ENCODE measurements at regions of chr17 and their contacts with region 1.

Region 1: DNA sequence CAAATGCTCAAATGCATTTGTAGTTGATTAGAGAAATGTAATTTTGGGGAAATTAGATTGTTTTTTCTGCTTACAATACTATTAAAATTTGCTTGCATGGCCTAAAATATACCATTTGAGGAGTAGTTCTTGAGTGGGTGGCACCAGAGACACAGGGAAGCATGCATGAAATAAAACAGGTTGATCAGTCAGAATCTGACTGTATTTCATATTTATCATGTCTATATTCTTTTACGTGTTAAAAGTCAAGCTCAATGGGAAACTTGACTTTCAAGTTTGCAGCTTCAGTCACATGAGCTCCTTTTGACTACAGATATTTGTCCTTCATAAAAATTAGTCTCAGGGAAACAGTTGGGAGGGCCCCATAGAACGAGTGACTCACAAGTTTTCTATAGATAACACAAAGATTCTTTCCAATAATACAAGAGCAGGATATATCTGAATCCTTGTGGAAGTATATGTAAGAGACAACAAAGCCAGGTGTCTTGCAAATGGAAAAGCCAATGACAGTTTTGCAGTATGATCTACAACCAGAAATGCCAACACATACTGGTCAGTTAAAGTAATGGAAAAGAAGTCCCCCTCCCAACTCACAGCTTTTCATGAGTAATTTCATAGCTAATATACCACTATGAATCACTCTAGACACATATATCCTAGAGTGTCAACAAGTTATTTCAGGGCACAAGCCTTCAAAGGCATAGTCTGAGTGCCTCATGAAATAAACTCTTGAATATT is 42.2 kb upstream of the CORO6 start:
- DNase-seq: no peak
- ATAC-seq: peak; percentile 60
- H3K4me3 ChIP-seq: no peak overlapping the region
- H3K27ac ChIP-seq: peak overlapping the region; percentile 4
- H3K4me1 ChIP-seq: peaks cover 8% of the 10 kb centered on the region
- H3K27me3 ChIP-seq: no peaks in the 10 kb centered on the region
- CTCF ChIP-seq: no peak
- EP300 ChIP-seq: no peak
- POLR2A ChIP-seq: no peak
- RAD21 ChIP-seq: no peak

Region 2: GRCh38 chr17:29653995-29654714 is 10.8 kb before region 1 on chr17:
- CTCF ChIA-PET with region 1: interaction called, 17 read pairs
- POLR2A ChIA-PET with region 1: interaction called, 6 read pairs
- RAD21 ChIA-PET with region 1: no interaction called
- SMC1A ChIA-PET with region 1: interaction called, 12 read pairs
- in situ Hi-C with region 1: no loop called
- intact Hi-C with region 1: no loop called
- DNase-seq: no peak
- ATAC-seq: no peak
- H3K4me3 ChIP-seq: no peak overlapping the region
- H3K27ac ChIP-seq: no peak overlapping the region
- H3K4me1 ChIP-seq: no peaks in the 10 kb centered on the region
- H3K27me3 ChIP-seq: no peaks in the 10 kb centered on the region
- CTCF ChIP-seq: no peak
- EP300 ChIP-seq: no peak
- POLR2A ChIP-seq: no peak
- RAD21 ChIP-seq: no peak

Region 3: GRCh38 chr17:29682054-29682453 is 17.1 kb after region 1 on chr17:
- CTCF ChIA-PET with region 1: interaction called, 5 read pairs
- POLR2A ChIA-PET with region 1: interaction called, 3 read pairs
- RAD21 ChIA-PET with region 1: interaction called, 6 read pairs
- SMC1A ChIA-PET with region 1: interaction called, 21 read pairs
- in situ Hi-C with region 1: no loop called
- intact Hi-C with region 1: no loop called
- DNase-seq: no peak
- ATAC-seq: peak; percentile 91
- H3K4me3 ChIP-seq: no peak overlapping the region
- H3K27ac ChIP-seq: peak overlapping the region; percentile 53; the same call in 1 of the 2 replicates
- H3K4me1 ChIP-seq: 0 out of 2 replicates have a peak, but pooled peaks cover 4% of the 10 kb centered on the region
- H3K27me3 ChIP-seq: no peaks in the 10 kb centered on the region
- CTCF ChIP-seq: peak; percentile 5 to 22 (median 12); a peak in 1 of 6 replicates
- EP300 ChIP-seq: no peak
- POLR2A ChIP-seq: no peak
- RAD21 ChIP-seq: peak; percentile 32

Region 4: GRCh38 chr17:29687596-29687995 is 22.7 kb after region 1 on chr17:
- CTCF ChIA-PET with region 1: interaction called, 5 read pairs
- POLR2A ChIA-PET with region 1: interaction called, 3 read pairs
- RAD21 ChIA-PET with region 1: interaction called, 3 read pairs
- SMC1A ChIA-PET with region 1: interaction called, 21 read pairs
- in situ Hi-C with region 1: no loop called
- intact Hi-C with region 1: no loop called
- DNase-seq: no peak
- ATAC-seq: no peak
- H3K4me3 ChIP-seq: no peak overlapping the region
- H3K27ac ChIP-seq: no peak overlapping the region
- H3K4me1 ChIP-seq: 0 out of 2 replicates have a peak, but pooled peaks cover 2% of the 10 kb centered on the region
- H3K27me3 ChIP-seq: no peaks in the 10 kb centered on the region
- CTCF ChIP-seq: no peak
- EP300 ChIP-seq: no peak
- POLR2A ChIP-seq: no peak
- RAD21 ChIP-seq: no peak

Measured in GM12878 (cell line).